Heart right ventricle (tissue), 16 donors: ENCODE measurements at regions of chr12 and their contacts with region 1.

Region 1: DNA sequence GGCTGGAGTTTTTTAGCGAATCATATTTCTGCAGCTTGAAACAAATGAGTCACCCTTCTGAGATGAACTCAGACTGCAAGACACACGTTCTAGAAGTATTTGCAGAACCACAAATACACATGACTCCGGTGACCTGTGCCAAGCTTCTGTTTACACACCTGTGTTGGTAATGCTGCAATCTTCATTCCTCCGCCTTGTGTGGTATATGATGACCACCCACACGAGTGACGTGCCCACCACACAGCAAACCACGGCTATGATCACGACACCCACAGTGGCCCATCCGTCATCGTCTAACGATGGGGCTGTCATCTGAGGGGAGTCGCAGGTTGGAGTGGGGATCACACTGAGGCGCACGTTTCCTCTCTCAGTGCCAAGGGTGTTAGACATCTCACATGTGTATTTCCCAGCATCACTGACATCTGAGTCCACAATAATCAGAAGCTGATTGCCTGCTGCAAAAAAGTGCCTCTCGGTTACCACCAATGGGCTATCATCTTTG is 43.0 kb downstream of the LRIG3 start:
- DNase-seq: no peak
- ATAC-seq: no peak
- H3K4me3 ChIP-seq: no peak overlapping the region
- H3K27ac ChIP-seq: no peak overlapping the region
- H3K4me1 ChIP-seq: peaks cover 0 to 4% (median 0%) of the 10 kb centered on the region in 9 donors
- H3K27me3 ChIP-seq: no peaks in the 10 kb centered on the region
- CTCF ChIP-seq: no peak

Region 2: DNA sequence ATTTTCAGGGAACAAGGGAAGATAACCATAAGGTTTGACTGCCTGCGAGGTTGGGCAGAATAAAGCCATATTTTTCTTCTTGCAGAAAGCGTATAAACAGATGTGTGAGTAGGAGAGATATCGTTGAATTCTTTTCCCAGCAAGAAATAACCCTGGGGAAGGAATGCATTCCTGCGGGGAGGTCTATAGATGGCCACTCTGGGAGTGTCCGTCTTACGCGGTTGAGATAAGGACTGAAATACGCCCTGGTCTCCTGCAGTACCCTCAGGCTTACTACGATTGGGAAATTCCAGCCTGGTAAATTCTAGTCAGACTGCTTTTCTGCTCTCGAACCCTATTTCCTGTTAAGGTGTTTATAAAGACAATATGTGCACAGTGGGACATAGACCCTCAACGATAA is 182.0 kb before region 1 on chr12:
- intact Hi-C with region 1: no loop called
- DNase-seq: no peak
- ATAC-seq: no peak
- H3K4me3 ChIP-seq: no peak overlapping the region
- H3K27ac ChIP-seq: no peak overlapping the region
- H3K4me1 ChIP-seq: no peaks in the 10 kb centered on the region
- H3K27me3 ChIP-seq: no peaks in the 10 kb centered on the region
- CTCF ChIP-seq: no peak

Region 3: GRCh38 chr12:58919231-58920101 is 42.2 kb after region 1 on chr12:
- intact Hi-C with region 1: loop called in 1 of 10 experiments (anchors 5 kb)
- DNase-seq: peak in 1 of 2 donors; percentile 26
- ATAC-seq: peak; percentile 23 to 61 (median 40)
- H3K4me3 ChIP-seq: peak overlapping the region; percentile 73 to 95 (median 90)
- H3K27ac ChIP-seq: peak overlapping the region; percentile 86 to 97 (median 93)
- H3K4me1 ChIP-seq: peaks cover 8 to 46% (median 35%) of the 10 kb centered on the region in 9 donors
- H3K27me3 ChIP-seq: peaks cover 0 to 15% (median 0%) of the 10 kb centered on the region in 7 donors
- CTCF ChIP-seq: no peak

Region 4: DNA sequence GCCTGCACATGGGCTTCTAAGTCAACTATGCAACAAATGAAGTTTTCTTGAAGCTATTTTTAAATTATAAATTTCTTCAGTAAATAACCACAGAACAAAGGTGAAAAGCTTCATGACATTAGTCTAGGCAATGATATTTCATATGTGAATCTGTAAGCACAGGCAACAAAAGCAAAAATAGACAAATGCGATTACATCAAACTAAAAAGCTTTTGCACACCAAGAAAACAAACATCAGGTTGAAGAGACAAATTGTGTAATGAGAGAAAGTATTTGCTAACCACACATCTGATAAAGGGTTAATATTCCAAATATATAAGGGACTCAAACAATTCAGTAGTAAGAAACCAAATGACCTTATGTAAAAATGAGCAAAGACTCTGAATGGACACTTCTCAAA is 1078.7 kb after region 1 on chr12:
- intact Hi-C with region 1: no loop called
- DNase-seq: no peak
- ATAC-seq: no peak
- H3K4me3 ChIP-seq: no peak overlapping the region
- H3K27ac ChIP-seq: no peak overlapping the region
- H3K4me1 ChIP-seq: no peaks in the 10 kb centered on the region
- H3K27me3 ChIP-seq: no peaks in the 10 kb centered on the region
- CTCF ChIP-seq: no peak